Right ventricle myocardium inferior (tissue), 1 donor: ENCODE measurements at regions of chr18 and their contacts with region 1.

Region 1: GRCh38 chr18:44673256-44673880 is 7.3 kb upstream of the SETBP1 start:
- DNase-seq: no peak
- ATAC-seq: peak; percentile 21

Region 2: DNA sequence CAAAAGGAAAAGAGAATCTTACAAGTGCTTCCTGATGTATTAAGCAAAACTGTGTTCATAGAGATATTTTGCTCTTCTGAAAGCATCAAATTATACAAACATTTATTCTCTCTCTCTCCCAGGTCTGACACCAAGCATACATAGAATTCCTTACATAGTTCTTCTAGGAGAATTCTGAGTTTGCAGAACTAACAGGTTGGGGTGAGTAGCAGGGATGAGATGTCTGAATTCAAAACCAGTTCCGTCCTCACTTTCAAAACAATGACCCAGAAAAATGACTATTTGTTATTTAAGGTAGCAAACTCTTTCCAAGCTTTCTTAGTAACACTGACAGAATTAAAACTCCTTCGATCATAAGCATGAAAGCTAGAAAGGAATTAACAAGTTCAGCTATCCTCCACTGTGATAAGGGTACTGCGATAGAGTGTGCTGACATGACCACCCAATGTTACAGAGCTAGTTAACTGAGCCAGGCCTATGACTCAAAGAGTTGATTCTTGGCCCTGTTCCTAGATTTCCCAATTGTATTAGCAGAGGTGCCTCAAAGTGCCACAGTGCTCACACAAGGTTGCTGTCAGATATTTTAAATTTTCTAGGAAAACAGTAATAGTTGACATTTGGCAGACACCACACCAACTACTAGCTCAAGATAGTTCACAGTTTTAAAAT is 78.4 kb before region 1 on chr18:
- intact Hi-C with region 1: loop called (anchors 5 kb)
- DNase-seq: no peak
- ATAC-seq: peak; percentile 75